ENCODE measurements at regions of chr1 and their contacts with region 1.

Region 1: GRCh38 chr1:173429471-173430402 is 47.4 kb upstream of the PRDX6 start:
- DNase-seq: peak; percentile 89 to 92
- ATAC-seq: peak; percentile 82 to 88 (median 86)
- H3K4me3 ChIP-seq: peak overlapping the region; percentile 41
- H3K27ac ChIP-seq: peak overlapping the region; percentile 73
- H3K4me1 ChIP-seq: peaks cover 23% of the 10 kb centered on the region
- H3K27me3 ChIP-seq: no peaks in the 10 kb centered on the region
- CTCF ChIP-seq: peak; percentile 56

Region 2: GRCh38 chr1:172745014-172745413 is 684.7 kb before region 1 on chr1:
- intact Hi-C with region 1: loop called in 1 of 2 experiments (anchors 10 kb)
- DNase-seq: no peak
- ATAC-seq: peak in 3 of 4 donors; percentile 57 to 80 (median 64)
- H3K4me3 ChIP-seq: no peak overlapping the region
- H3K27ac ChIP-seq: no peak overlapping the region
- H3K4me1 ChIP-seq: no peaks in the 10 kb centered on the region
- H3K27me3 ChIP-seq: peaks cover 0 to 3% (median 0%) of the 10 kb centered on the region in 3 donors
- CTCF ChIP-seq: peak; percentile 36

Region 3: GRCh38 chr1:173476664-173477285 is 47.0 kb after region 1 on chr1:
- intact Hi-C with region 1: loop called (anchors 1 to 5 kb)
- DNase-seq: peak; percentile 95 to 97
- ATAC-seq: peak; percentile 82 to 88 (median 86)
- H3K4me3 ChIP-seq: peak overlapping the region; percentile 88
- H3K27ac ChIP-seq: peak overlapping the region; percentile 99
- H3K4me1 ChIP-seq: peaks cover 44% of the 10 kb centered on the region
- H3K27me3 ChIP-seq: no peaks in the 10 kb centered on the region
- CTCF ChIP-seq: no peak

Region 4: DNA sequence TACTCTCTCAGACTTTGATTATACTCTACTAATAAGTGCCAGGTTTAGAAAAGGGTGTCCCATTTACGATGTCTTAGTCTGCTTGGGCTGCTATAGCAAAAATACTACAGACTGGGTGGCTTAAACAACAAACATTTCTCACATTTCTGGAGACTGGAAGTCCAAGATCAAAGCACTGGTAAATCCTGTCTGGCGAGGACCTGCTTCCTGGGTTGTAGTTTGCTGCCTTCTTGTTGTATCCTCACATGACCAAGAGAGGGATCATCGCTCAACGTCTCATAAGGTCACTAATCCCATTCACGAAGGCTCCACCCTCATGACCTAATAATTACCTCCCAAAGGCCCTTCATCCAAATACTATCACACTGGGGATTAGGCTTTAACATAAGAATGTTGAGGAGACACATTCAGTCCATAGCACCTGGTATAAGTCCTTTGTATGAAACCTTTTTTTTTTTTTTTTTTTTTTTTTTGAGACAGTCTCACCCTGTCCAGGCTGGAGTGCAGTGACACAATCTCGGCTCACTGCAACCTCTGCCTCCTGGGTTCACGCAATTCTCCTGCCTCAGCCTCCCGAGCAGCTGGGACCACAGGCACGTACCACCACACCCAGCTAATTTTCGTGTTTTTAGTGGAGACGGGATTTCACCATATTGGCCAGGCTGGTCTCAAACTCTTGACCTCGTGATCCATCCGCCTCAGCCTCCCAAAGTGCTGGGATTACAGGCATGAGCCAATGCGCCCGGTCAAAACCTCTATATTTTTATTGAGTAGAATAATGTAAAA is 59.6 kb after region 1 on chr1:
- intact Hi-C with region 1: loop called in 1 of 2 experiments (anchors 5 kb)
- DNase-seq: no peak
- ATAC-seq: peak in 3 of 4 donors; percentile 26 to 40 (median 29)
- H3K4me3 ChIP-seq: no peak overlapping the region
- H3K27ac ChIP-seq: no peak overlapping the region
- H3K4me1 ChIP-seq: no peaks in the 10 kb centered on the region
- H3K27me3 ChIP-seq: no peaks in the 10 kb centered on the region
- CTCF ChIP-seq: no peak

Region 5: GRCh38 chr1:173714759-173715537 is 285.2 kb after region 1 on chr1 and contains the start of gene KLHL20:
- intact Hi-C with region 1: loop called (anchors 2 to 10 kb)
- DNase-seq: peak; percentile 73 to 87
- ATAC-seq: peak; percentile 93 to 99 (median 98)
- H3K4me3 ChIP-seq: peak within 1 kb of the TSS; percentile 98
- H3K27ac ChIP-seq: peak within 1 kb of the TSS; percentile 93
- H3K4me1 ChIP-seq: peaks cover 21% of the 10 kb centered on the region
- H3K27me3 ChIP-seq: no peaks in the 10 kb centered on the region
- CTCF ChIP-seq: no peak
- total RNA-seq, gene KLHL20: 11.3 to 19.6 (median 15.7) TPM

Region 6: DNA sequence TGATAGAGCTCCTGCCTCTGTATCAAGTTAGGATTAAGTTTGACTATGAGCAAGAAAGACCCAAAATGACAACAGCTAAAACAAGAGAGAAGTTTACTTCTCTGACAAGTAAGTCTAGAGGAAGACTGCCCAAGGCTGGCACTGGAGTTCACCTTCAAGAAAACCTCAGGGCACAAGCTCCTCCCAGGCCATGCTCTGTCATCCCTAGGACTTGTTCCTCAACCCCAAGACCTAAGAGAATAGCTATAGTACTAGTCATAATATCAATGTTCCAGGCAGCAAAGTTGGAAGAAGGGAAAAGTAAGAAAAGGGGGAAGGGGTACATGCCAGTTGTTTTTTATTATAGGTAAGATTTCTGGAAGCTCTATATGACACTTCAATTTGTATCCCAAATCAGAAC is 368.3 kb after region 1 on chr1:
- intact Hi-C with region 1: loop called in 1 of 2 experiments (anchors 10 kb)
- DNase-seq: no peak
- ATAC-seq: no peak
- H3K4me3 ChIP-seq: no peak overlapping the region
- H3K27ac ChIP-seq: no peak overlapping the region
- H3K4me1 ChIP-seq: no peaks in the 10 kb centered on the region
- H3K27me3 ChIP-seq: no peaks in the 10 kb centered on the region
- CTCF ChIP-seq: no peak

Region 7: DNA sequence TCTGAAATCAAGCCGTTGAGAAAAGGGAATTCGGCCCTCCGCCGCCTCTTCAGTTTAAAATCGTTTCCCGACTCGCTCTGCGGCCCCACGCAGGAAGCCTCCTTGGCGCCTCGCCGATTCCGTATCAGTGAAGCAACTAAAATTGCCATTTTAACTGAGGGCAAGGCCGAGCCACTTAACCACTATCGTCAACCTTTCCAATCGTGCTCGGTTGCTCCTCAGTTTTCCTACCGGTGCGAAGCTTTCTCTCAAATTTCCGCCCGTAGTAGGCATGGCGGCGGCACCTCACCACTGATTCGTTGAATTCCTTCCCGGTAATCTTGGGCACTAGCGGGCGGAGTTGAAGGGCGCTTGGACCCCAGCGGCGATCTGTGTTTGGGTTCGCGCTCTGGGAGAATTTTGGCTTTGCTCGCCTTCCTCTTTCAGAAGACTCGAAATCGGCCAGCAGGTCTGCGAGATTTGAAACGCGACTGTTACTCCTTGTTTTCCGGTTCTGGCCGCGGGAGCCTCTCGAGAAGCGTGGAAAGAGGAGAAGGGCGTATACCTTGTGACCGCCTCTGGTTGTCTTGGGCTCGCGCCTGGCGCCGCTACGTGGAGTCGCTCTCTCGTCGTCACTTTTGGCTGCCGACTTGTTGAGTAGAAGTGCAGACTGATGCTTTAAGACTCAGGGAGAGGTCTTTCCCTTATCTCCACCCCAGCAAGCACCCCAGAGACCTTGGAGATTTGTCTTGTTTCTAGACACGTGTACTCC is 394.8 kb after region 1 on chr1 and contains the starts of genes CENPL and DARS2:
- intact Hi-C with region 1: loop called in 1 of 2 experiments (anchors 10 kb)
- DNase-seq: peak; percentile 97 to 98
- ATAC-seq: peak; percentile 98
- H3K4me3 ChIP-seq: peak within 1 kb of the TSS; percentile 76
- H3K27ac ChIP-seq: peak within 1 kb of the TSS; percentile 91
- H3K4me1 ChIP-seq: peaks cover 13% of the 10 kb centered on the region
- H3K27me3 ChIP-seq: no peaks in the 10 kb centered on the region
- CTCF ChIP-seq: no peak
- total RNA-seq, gene CENPL: 2.1 to 6.7 (median 4.4) TPM
- total RNA-seq, gene DARS2: 5.7 to 14.3 (median 6.7) TPM

Measured in psoas muscle (tissue), 8 donors.